ENCODE measurements at regions of chr12 and their contacts with region 1.

Region 1: GRCh38 chr12:109154451-109155438 is 38.4 kb downstream of the ACACB start:
- DNase-seq: no peak
- H3K4me3 ChIP-seq: peak overlapping the region; percentile 69 to 80
- H3K27ac ChIP-seq: peak overlapping the region; percentile 91
- H3K4me1 ChIP-seq: peaks cover 55% of the 10 kb centered on the region
- H3K27me3 ChIP-seq: no peaks in the 10 kb centered on the region
- CTCF ChIP-seq: no peak
- POLR2A ChIP-seq: peak in 1 of 2 donors; percentile 41

Region 2: GRCh38 chr12:109110988-109111495 is 43.7 kb before region 1 on chr12:
- intact Hi-C with region 1: loop called (anchors 5 kb)
- DNase-seq: peak in 1 of 2 donors; percentile 93
- H3K4me3 ChIP-seq: peak overlapping the region; percentile 40 to 55
- H3K27ac ChIP-seq: peak overlapping the region; percentile 91
- H3K4me1 ChIP-seq: peaks cover 50% of the 10 kb centered on the region
- H3K27me3 ChIP-seq: no peaks in the 10 kb centered on the region
- CTCF ChIP-seq: no peak
- POLR2A ChIP-seq: peak in 1 of 2 donors; percentile 59

Region 3: GRCh38 chr12:109192358-109192757 is 37.6 kb after region 1 on chr12:
- intact Hi-C with region 1: no loop called
- DNase-seq: no peak
- H3K4me3 ChIP-seq: no peak overlapping the region
- H3K27ac ChIP-seq: no peak overlapping the region
- H3K4me1 ChIP-seq: no peaks in the 10 kb centered on the region
- H3K27me3 ChIP-seq: no peaks in the 10 kb centered on the region
- CTCF ChIP-seq: no peak
- POLR2A ChIP-seq: no peak

Region 4: GRCh38 chr12:110088936-110089335 is 934.2 kb after region 1 on chr12:
- intact Hi-C with region 1: no loop called
- DNase-seq: no peak
- H3K4me3 ChIP-seq: no peak overlapping the region
- H3K27ac ChIP-seq: no peak overlapping the region
- H3K4me1 ChIP-seq: no peaks in the 10 kb centered on the region
- H3K27me3 ChIP-seq: no peaks in the 10 kb centered on the region
- CTCF ChIP-seq: no peak
- POLR2A ChIP-seq: no peak